CD8-positive, alpha-beta T cell (primary cell): ENCODE measurements at regions of chr11 and their contacts with region 1.

Region 1: GRCh38 chr11:100753172-100753543 is 66.1 kb downstream of the ARHGAP42 start:
- DNase-seq: no peak
- ATAC-seq: no peak
- H3K4me3 ChIP-seq: no peak overlapping the region
- H3K4me3 Mint-ChIP-seq: no peak overlapping the region
- H3K27ac ChIP-seq: no peak overlapping the region
- H3K27ac Mint-ChIP-seq: no peak overlapping the region
- H3K4me1 ChIP-seq: no peaks in the 10 kb centered on the region
- H3K4me1 Mint-ChIP-seq: no peaks in the 10 kb centered on the region
- H3K27me3 ChIP-seq: no peaks in the 10 kb centered on the region
- H3K27me3 Mint-ChIP-seq: no peaks in the 10 kb centered on the region
- CTCF ChIP-seq: no peak

Region 2: GRCh38 chr11:100691891-100692689 is 61.1 kb before region 1 on chr11:
- CTCF ChIA-PET with region 1: no interaction called
- POLR2A ChIA-PET with region 1: no interaction called
- intact Hi-C with region 1: loop called in 1 of 2 experiments (anchors 10 kb)
- DNase-seq: no peak
- ATAC-seq: no peak
- H3K4me3 ChIP-seq: no peak overlapping the region
- H3K4me3 Mint-ChIP-seq: no peak overlapping the region
- H3K27ac ChIP-seq: no peak overlapping the region
- H3K27ac Mint-ChIP-seq: no peak overlapping the region
- H3K4me1 ChIP-seq: no peaks in the 10 kb centered on the region
- H3K4me1 Mint-ChIP-seq: peaks cover 9% of the 10 kb centered on the region
- H3K27me3 ChIP-seq: no peaks in the 10 kb centered on the region
- H3K27me3 Mint-ChIP-seq: peaks cover 16% of the 10 kb centered on the region
- CTCF ChIP-seq: no peak

Region 3: GRCh38 chr11:100727410-100727809 is 25.7 kb before region 1 on chr11:
- CTCF ChIA-PET with region 1: no interaction called
- POLR2A ChIA-PET with region 1: no interaction called
- intact Hi-C with region 1: no loop called
- DNase-seq: no peak
- ATAC-seq: no peak
- H3K4me3 ChIP-seq: no peak overlapping the region
- H3K4me3 Mint-ChIP-seq: no peak overlapping the region
- H3K27ac ChIP-seq: no peak overlapping the region
- H3K27ac Mint-ChIP-seq: no peak overlapping the region
- H3K4me1 ChIP-seq: no peaks in the 10 kb centered on the region
- H3K4me1 Mint-ChIP-seq: no peaks in the 10 kb centered on the region
- H3K27me3 ChIP-seq: no peaks in the 10 kb centered on the region
- H3K27me3 Mint-ChIP-seq: no peaks in the 10 kb centered on the region
- CTCF ChIP-seq: no peak